ENCODE measurements at regions of chr7 and their contacts with region 1.

Region 1: GRCh38 chr7:74320645-74321221 is 31.5 kb downstream of the CLIP2 start:
- DNase-seq: peak; percentile 41
- H3K4me3 ChIP-seq: no peak overlapping the region
- H3K27ac ChIP-seq: no peak overlapping the region
- H3K4me1 ChIP-seq: peaks cover 10 to 19% (median 15%) of the 10 kb centered on the region in 4 donors
- H3K27me3 ChIP-seq: no peaks in the 10 kb centered on the region
- CTCF ChIP-seq: no peak
- EP300 ChIP-seq: no peak
- POLR2A ChIP-seq: no peak

Region 2: DNA sequence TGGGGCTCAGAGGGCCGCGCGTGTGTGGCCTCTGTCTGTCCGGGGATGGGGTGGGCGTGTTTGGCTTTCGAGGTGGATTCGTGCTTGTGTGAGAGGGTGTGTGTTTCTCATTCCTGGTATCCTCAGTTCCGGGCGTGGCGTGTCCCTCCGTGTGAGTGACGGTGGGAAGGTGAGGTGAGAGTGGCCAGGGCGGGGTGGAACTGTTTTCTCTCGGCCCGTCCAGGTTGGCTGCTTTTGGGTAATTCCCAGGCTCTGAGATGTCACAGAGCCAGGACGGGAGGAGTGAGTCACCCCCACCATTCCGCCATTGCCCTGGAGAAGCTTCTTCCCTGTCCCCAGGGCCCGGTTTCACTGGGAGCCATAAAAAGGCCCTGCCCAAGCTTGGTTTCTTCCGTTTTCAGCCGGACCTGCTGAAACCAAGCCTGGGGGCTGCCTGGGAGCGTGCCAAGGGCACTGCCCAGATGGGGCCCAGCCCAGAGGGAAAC is 511.2 kb before region 1 on chr7:
- in situ Hi-C with region 1: no loop called
- intact Hi-C with region 1: no loop called
- DNase-seq: peak; percentile 91
- H3K4me3 ChIP-seq: no peak overlapping the region
- H3K27ac ChIP-seq: peak overlapping the region; percentile 79 to 89 (median 87)
- H3K4me1 ChIP-seq: peaks cover 5 to 30% (median 17%) of the 10 kb centered on the region in 4 donors
- H3K27me3 ChIP-seq: peaks cover 3% of the 10 kb centered on the region
- CTCF ChIP-seq: no peak
- EP300 ChIP-seq: no peak
- POLR2A ChIP-seq: peak; percentile 64

Region 3: DNA sequence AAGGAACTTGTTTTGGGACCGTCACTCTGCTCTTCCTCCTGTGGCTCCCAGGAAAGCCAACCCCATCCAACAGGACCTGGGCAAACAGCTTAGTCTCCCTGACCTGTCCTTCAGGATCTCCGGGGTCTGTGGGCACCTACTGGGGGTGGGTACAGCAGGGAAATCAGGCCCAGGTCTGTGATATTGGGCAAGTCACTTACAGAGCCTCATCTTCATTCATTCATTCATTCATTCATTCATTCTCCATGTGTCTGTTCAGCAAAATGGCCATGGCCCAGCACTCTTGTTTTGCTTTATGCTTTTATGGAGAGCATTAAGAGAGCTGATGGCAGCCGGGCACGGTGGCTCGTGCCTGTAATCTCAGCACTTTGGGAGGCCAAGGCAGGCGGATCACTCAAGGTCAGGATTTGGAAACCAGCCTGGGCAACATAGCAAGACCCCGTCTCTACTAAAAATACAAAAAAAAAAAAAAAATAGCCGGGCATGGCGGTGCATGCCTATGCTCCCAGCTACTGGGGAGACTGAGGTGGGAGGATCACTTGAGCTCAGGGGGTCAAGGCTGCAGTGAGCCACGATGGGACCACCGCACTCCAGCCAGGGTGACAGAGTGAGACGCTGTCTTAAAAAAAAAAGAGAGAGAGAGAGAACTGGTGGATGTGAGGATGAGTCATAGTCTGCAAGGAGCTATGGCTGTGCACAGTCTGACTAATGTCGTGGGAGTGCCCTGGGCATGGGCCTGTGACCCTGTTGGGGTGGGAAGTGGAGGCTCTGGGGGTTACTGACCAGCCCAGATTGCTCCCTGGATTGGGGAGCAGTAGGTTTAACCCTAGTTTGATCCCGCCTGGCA is 22.8 kb after region 1 on chr7:
- in situ Hi-C with region 1: no loop called
- intact Hi-C with region 1: loop called (anchors 1 kb)
- DNase-seq: no peak
- H3K4me3 ChIP-seq: no peak overlapping the region
- H3K27ac ChIP-seq: no peak overlapping the region
- H3K4me1 ChIP-seq: no peaks in the 10 kb centered on the region
- H3K27me3 ChIP-seq: no peaks in the 10 kb centered on the region
- CTCF ChIP-seq: no peak
- EP300 ChIP-seq: no peak
- POLR2A ChIP-seq: no peak

Region 4: GRCh38 chr7:74656837-74657691 is 336.3 kb after region 1 on chr7:
- in situ Hi-C with region 1: no loop called
- intact Hi-C with region 1: no loop called
- DNase-seq: peak; percentile 99
- H3K4me3 ChIP-seq: peak overlapping the region; percentile 54 to 99 (median 98)
- H3K27ac ChIP-seq: peak overlapping the region; percentile 99 to 100 (median 100)
- H3K4me1 ChIP-seq: peaks cover 21 to 42% (median 40%) of the 10 kb centered on the region in 4 donors
- H3K27me3 ChIP-seq: no peaks in the 10 kb centered on the region
- CTCF ChIP-seq: peak in 2 of 5 experiments; percentile 14 to 22
- EP300 ChIP-seq: no peak
- POLR2A ChIP-seq: peak; percentile 79